Naive thymus-derived CD4-positive, alpha-beta T cell (primary cell): ENCODE measurements at regions of chr12 and their contacts with region 1.

Region 1: GRCh38 chr12:44875954-44876553 is at the start of gene NELL2:
- DNase-seq: peak; percentile 21 to 71 (median 47)
- ATAC-seq: peak; percentile 81
- H3K4me3 ChIP-seq: peak within 1 kb of the TSS; percentile 58
- H3K4me3 Mint-ChIP-seq: peak within 1 kb of the TSS; percentile 91 to 100 (median 96)
- H3K27ac ChIP-seq: peak within 1 kb of the TSS; percentile 78
- H3K27ac Mint-ChIP-seq: peak within 1 kb of the TSS; percentile 82 to 95 (median 89)
- H3K4me1 ChIP-seq: peaks cover 7 to 12% of the 10 kb centered on the region in 2 donors
- H3K4me1 Mint-ChIP-seq: peaks cover 14 to 41% (median 32%) of the 10 kb centered on the region in 7 donors
- H3K27me3 ChIP-seq: no peaks in the 10 kb centered on the region
- H3K27me3 Mint-ChIP-seq: peaks cover 0 to 47% (median 23%) of the 10 kb centered on the region in 5 donors
- total RNA-seq, gene NELL2: 60.9 to 414 (median 228) TPM

Region 2: GRCh38 chr12:44720265-44720664 is 155.8 kb before region 1 on chr12:
- CTCF ChIA-PET with region 1: no interaction called
- POLR2A ChIA-PET with region 1: no interaction called
- intact Hi-C with region 1: loop called in 1 of 2 experiments (anchors 5 kb)
- DNase-seq: no peak
- ATAC-seq: no peak
- H3K4me3 ChIP-seq: no peak overlapping the region
- H3K4me3 Mint-ChIP-seq: no peak overlapping the region
- H3K27ac ChIP-seq: no peak overlapping the region
- H3K27ac Mint-ChIP-seq: peak overlapping the region in 2 of 9 donors; percentile 12 to 33
- H3K4me1 ChIP-seq: no peaks in the 10 kb centered on the region
- H3K4me1 Mint-ChIP-seq: peaks cover 0 to 76% (median 29%) of the 10 kb centered on the region in 7 donors
- H3K27me3 ChIP-seq: no peaks in the 10 kb centered on the region
- H3K27me3 Mint-ChIP-seq: no peaks in the 10 kb centered on the region

Region 3: GRCh38 chr12:44780221-44780790 is 95.7 kb before region 1 on chr12:
- CTCF ChIA-PET with region 1: interaction called, 80 read pairs
- POLR2A ChIA-PET with region 1: interaction called, 23 read pairs
- intact Hi-C with region 1: no loop called
- DNase-seq: no peak
- ATAC-seq: no peak
- H3K4me3 ChIP-seq: no peak overlapping the region
- H3K4me3 Mint-ChIP-seq: no peak overlapping the region
- H3K27ac ChIP-seq: no peak overlapping the region
- H3K27ac Mint-ChIP-seq: peak overlapping the region in 4 of 9 donors; percentile 16 to 71 (median 36)
- H3K4me1 ChIP-seq: no peaks in the 10 kb centered on the region
- H3K4me1 Mint-ChIP-seq: peaks cover 6 to 44% (median 27%) of the 10 kb centered on the region in 7 donors
- H3K27me3 ChIP-seq: no peaks in the 10 kb centered on the region
- H3K27me3 Mint-ChIP-seq: peaks cover 0 to 5% (median 0%) of the 10 kb centered on the region in 5 donors

Region 4: GRCh38 chr12:44817687-44818086 is 58.4 kb before region 1 on chr12:
- CTCF ChIA-PET with region 1: interaction called, 99 read pairs
- POLR2A ChIA-PET with region 1: interaction called, 24 read pairs
- intact Hi-C with region 1: loop called (anchors 1 kb)
- DNase-seq: no peak
- ATAC-seq: no peak
- H3K4me3 ChIP-seq: no peak overlapping the region
- H3K4me3 Mint-ChIP-seq: peak overlapping the region in 3 of 10 donors; percentile 9 to 39 (median 28)
- H3K27ac ChIP-seq: no peak overlapping the region
- H3K27ac Mint-ChIP-seq: peak overlapping the region in 8 of 9 donors; percentile 5 to 91 (median 37)
- H3K4me1 ChIP-seq: peaks cover 17 to 24% of the 10 kb centered on the region in 2 donors
- H3K4me1 Mint-ChIP-seq: peaks cover 13 to 84% (median 64%) of the 10 kb centered on the region in 7 donors
- H3K27me3 ChIP-seq: no peaks in the 10 kb centered on the region
- H3K27me3 Mint-ChIP-seq: no peaks in the 10 kb centered on the region

Region 5: GRCh38 chr12:44835641-44836379 is 40.2 kb before region 1 on chr12:
- CTCF ChIA-PET with region 1: interaction called, 8 read pairs
- POLR2A ChIA-PET with region 1: interaction called, 81 read pairs
- intact Hi-C with region 1: loop called in 1 of 2 experiments (anchors 1 kb)
- DNase-seq: peak in 6 of 9 donors; percentile 28 to 63 (median 36)
- ATAC-seq: peak; percentile 71
- H3K4me3 ChIP-seq: peak overlapping the region; percentile 7
- H3K4me3 Mint-ChIP-seq: peak overlapping the region; percentile 38 to 84 (median 72)
- H3K27ac ChIP-seq: peak overlapping the region; percentile 67
- H3K27ac Mint-ChIP-seq: peak overlapping the region; percentile 80 to 99 (median 95)
- H3K4me1 ChIP-seq: peaks cover 51 to 53% of the 10 kb centered on the region in 2 donors
- H3K4me1 Mint-ChIP-seq: peaks cover 26 to 98% (median 79%) of the 10 kb centered on the region in 7 donors
- H3K27me3 ChIP-seq: no peaks in the 10 kb centered on the region
- H3K27me3 Mint-ChIP-seq: no peaks in the 10 kb centered on the region

Region 6: GRCh38 chr12:44847888-44848702 is 28.0 kb before region 1 on chr12:
- CTCF ChIA-PET with region 1: interaction called, 23 read pairs
- POLR2A ChIA-PET with region 1: interaction called, 20 read pairs
- intact Hi-C with region 1: loop called (anchors 1 kb)
- DNase-seq: peak; percentile 29 to 86 (median 79)
- ATAC-seq: peak; percentile 93
- H3K4me3 ChIP-seq: peak overlapping the region; percentile 30
- H3K4me3 Mint-ChIP-seq: peak overlapping the region; percentile 65 to 84 (median 78)
- H3K27ac ChIP-seq: peak overlapping the region; percentile 62
- H3K27ac Mint-ChIP-seq: peak overlapping the region; percentile 90 to 99 (median 97)
- H3K4me1 ChIP-seq: peaks cover 67 to 77% of the 10 kb centered on the region in 2 donors
- H3K4me1 Mint-ChIP-seq: peaks cover 27 to 95% (median 84%) of the 10 kb centered on the region in 7 donors
- H3K27me3 ChIP-seq: no peaks in the 10 kb centered on the region
- H3K27me3 Mint-ChIP-seq: no peaks in the 10 kb centered on the region

Region 7: DNA sequence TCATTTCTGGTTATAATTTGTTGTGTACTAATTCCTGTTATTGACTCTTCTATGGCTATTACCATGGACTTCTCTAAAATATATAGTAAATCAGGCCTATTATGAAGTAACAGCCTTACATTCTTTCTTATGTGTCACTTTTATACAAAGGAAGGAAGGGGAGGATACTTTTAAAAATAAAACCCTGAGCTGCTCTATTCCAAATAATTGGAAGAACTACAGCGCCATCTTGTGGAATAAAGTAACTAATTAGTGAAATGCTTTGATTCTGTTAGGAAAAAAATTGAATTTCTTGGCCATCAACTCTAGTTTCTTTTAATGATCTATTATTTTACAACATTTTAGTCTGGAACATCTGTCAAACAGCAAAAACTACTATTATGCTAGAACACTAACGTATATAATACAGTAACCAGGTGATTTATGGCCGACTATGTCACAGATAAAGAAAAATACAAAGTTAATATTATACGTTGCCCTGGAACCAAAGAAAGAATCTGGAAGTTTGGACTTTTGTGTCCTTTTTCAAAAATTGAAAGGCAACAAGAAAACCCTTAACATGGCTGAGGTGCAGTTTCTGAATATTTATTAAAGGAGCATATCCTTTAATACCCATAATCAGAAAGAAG is 55.0 kb after region 1 on chr12:
- CTCF ChIA-PET with region 1: no interaction called
- POLR2A ChIA-PET with region 1: no interaction called
- intact Hi-C with region 1: loop called (anchors 2 kb)
- DNase-seq: peak in 7 of 9 donors; percentile 46 to 72 (median 60)
- ATAC-seq: peak; percentile 63
- H3K4me3 ChIP-seq: no peak overlapping the region
- H3K4me3 Mint-ChIP-seq: no peak overlapping the region
- H3K27ac ChIP-seq: no peak overlapping the region
- H3K27ac Mint-ChIP-seq: no peak overlapping the region
- H3K4me1 ChIP-seq: no peaks in the 10 kb centered on the region
- H3K4me1 Mint-ChIP-seq: peaks cover 0 to 5% (median 0%) of the 10 kb centered on the region in 7 donors
- H3K27me3 ChIP-seq: no peaks in the 10 kb centered on the region
- H3K27me3 Mint-ChIP-seq: peaks cover 0 to 11% (median 4%) of the 10 kb centered on the region in 5 donors